ENCODE measurements at regions of chr6 and their contacts with region 1.

Region 1: DNA sequence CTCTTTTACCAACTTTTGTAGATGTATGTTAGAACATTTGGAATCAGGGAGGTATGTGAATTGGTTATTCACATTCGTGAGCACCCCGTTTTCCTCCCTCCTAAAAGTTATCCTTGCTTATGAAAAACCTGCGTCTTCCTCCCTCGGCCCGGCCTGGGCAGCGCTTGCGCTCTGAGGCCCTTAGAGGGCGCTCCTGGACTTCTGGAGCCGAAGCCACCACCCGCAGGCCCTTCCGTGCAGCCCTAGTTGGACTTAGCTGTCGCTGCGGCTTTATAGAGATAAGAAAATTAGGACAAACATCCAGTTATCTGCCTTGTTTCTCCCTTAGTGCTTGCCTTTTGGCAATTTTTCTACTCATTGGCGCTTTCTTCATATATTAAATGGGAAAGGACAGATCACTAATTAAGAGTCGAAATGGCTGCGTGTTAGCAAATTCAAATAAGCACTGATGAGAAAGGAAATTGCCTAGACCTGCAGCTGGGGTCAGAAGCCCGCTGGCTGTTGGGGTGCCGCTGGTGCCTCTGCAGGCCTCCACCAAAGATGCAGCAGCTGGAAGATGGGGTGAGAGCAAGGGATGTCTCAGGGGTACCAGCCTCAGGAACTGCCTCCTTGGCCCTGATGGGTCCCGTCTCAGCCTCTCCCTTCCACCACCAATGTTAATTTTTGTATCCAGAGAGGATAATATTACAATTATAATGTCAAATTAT is 5.2 kb downstream of the FNDC1 start:
- DNase-seq: peak; percentile 68 to 80
- ATAC-seq: peak; percentile 68 to 88 (median 80)
- H3K4me3 ChIP-seq: no peak overlapping the region
- H3K27ac ChIP-seq: no peak overlapping the region
- H3K4me1 ChIP-seq: no peaks in the 10 kb centered on the region
- H3K27me3 ChIP-seq: peaks cover 6 to 44% (median 8%) of the 10 kb centered on the region in 3 donors
- CTCF ChIP-seq: peak; percentile 80

Region 2: GRCh38 chr6:159084493-159085091 is 89.8 kb before region 1 on chr6:
- intact Hi-C with region 1: no loop called
- DNase-seq: no peak
- ATAC-seq: no peak
- H3K4me3 ChIP-seq: no peak overlapping the region
- H3K27ac ChIP-seq: no peak overlapping the region
- H3K4me1 ChIP-seq: no peaks in the 10 kb centered on the region
- H3K27me3 ChIP-seq: no peaks in the 10 kb centered on the region
- CTCF ChIP-seq: no peak

Region 3: DNA sequence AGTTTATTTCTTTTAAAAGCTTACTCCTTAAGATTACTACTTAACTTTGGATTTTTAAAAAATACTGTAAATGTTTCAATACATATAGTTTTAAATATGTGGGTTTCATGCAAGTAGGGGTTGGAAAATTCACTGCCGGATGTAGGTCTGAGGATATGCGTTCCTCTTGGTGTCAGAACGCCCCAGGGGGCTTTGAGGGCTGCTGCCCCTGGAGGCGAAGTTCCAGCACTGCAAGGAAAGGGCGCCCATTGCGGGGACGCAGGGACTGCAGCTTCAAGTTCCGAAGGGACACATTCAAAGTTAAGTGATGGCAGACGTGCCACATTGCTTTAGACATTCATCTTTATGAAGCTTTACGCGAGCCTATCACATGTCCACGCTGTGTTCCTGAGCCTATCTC is 365.7 kb after region 1 on chr6:
- intact Hi-C with region 1: no loop called
- DNase-seq: no peak
- ATAC-seq: peak in 3 of 4 donors; percentile 36 to 44 (median 40)
- H3K4me3 ChIP-seq: no peak overlapping the region
- H3K27ac ChIP-seq: no peak overlapping the region
- H3K4me1 ChIP-seq: no peaks in the 10 kb centered on the region
- H3K27me3 ChIP-seq: no peaks in the 10 kb centered on the region
- CTCF ChIP-seq: no peak

Region 4: GRCh38 chr6:159654483-159655098 is 480.2 kb after region 1 on chr6:
- intact Hi-C with region 1: loop called (anchors 5 to 10 kb)
- DNase-seq: no peak
- ATAC-seq: peak in 3 of 4 donors; percentile 31 to 49 (median 41)
- H3K4me3 ChIP-seq: no peak overlapping the region
- H3K27ac ChIP-seq: no peak overlapping the region
- H3K4me1 ChIP-seq: no peaks in the 10 kb centered on the region
- H3K27me3 ChIP-seq: no peaks in the 10 kb centered on the region
- CTCF ChIP-seq: peak; percentile 68